Activated CD4-positive, alpha-beta memory T cell treated with anti-CD3 and anti-CD28 coated beads, Interleukin-2, amount 10 ng/mL, durations not matched to agents 7 days and 5 days (primary cell): ENCODE measurements at regions of chr2 and their contacts with region 1.

Region 1: GRCh38 chr2:26033818-26034636 is at the start of gene RAB10:
- DNase-seq: peak; percentile 100
- H3K4me3 Mint-ChIP-seq: peak within 1 kb of the TSS; percentile 87
- H3K27ac Mint-ChIP-seq: peak within 1 kb of the TSS; percentile 93
- H3K4me1 Mint-ChIP-seq: peaks cover 35% of the 10 kb centered on the region
- H3K27me3 Mint-ChIP-seq: no peaks in the 10 kb centered on the region
- total RNA-seq, gene RAB10: 116 to 117 TPM

Region 2: DNA sequence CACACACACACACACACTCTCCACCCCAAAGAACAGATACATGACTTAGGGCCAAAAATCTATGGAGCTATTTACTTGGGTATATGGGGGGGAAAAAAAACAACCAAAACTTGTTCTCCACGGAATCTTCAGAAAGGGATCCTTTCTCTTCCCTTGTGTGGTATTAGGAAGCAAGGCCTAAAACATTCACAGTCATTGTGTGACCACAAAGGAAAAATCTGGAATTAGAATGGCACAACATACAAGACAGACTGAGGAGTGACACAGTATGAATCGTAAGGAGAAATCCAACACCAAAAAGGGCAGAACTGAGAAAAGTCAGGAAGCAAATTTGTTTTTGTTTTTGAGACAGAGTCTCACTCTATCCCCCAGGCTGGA is 226.0 kb before region 1 on chr2:
- CTCF ChIA-PET with region 1: no interaction called
- POLR2A ChIA-PET with region 1: no interaction called
- DNase-seq: no peak
- H3K4me3 Mint-ChIP-seq: no peak overlapping the region
- H3K27ac Mint-ChIP-seq: no peak overlapping the region
- H3K4me1 Mint-ChIP-seq: peaks cover 49% of the 10 kb centered on the region
- H3K27me3 Mint-ChIP-seq: no peaks in the 10 kb centered on the region

Region 3: DNA sequence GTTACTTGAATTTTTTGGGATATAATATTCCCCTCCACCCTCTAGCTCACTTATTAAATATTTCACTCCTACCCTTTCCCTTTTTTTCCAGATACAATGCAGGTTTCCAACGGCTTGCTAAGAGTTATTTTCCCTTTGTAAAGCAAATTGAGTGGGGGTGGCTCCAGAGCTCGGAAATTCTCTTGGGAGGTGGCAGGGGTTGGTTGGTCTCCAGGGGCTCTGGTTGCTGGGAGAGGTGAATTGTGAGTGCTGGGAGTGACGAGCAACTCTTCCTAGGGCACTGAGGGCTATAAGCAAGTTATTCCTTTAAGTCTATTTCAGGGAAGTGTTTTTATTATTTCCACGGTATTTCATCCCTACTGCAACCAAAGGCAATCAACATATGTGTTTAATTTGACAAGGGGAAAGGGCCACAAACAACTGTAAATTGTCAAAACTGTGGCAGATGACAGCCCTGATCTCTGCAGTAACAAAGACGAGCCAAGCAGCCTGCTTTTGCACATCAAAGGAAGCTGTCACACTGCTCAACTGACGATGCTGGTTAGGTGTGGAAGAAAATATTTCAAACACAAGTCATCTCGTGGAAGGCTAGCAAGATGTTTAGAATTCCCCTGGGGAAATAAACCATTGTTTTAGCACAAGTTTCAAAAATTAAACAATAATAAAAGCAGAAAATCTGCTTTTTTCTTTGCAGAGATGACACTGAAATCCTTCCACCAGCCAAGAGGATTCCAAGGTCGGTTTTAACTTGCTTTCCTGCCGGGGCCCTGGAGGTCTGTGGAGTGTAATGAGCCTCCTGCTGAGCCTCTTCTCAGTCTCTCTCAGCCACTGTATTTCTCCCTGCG is 121.0 kb before region 1 on chr2:
- CTCF ChIA-PET with region 1: no interaction called
- POLR2A ChIA-PET with region 1: no interaction called
- DNase-seq: no peak
- H3K4me3 Mint-ChIP-seq: no peak overlapping the region
- H3K27ac Mint-ChIP-seq: no peak overlapping the region
- H3K4me1 Mint-ChIP-seq: peaks cover 11% of the 10 kb centered on the region
- H3K27me3 Mint-ChIP-seq: peaks cover 3% of the 10 kb centered on the region

Region 4: DNA sequence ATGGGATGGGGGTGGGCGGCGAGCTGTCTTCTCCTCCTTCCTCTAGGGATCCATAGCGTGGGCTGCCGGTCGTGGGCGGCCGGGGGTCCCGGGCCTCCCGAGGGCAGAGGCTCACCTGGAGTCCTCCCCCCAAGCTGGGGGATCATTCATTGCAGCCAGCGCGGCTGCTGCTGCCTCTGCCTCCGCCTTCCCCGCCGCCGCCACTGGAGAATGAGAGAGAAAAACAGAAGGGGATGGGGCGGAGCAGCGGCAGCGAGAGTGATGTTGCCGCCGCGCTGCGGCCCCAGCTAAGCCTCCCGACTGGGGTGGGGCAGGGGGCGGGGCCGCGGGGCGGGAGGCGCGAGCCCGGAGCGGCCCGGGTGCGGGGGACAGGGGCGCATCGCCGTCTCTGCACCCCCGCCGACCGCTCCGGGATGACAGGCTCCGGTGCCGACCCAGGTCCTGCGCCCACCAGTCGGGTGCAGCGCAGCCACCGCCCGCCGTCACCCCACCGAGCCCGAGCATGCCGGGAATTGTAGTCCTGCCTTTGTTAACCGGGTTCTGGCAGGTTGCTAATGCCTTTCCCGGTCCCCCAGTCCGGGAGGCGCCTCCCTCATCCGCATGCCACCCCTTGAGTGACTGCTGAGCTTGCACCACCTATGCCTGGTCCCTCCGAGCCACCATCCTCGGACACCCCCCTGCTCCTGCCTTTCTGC is 51.6 kb before region 1 on chr2 and contains the start of gene KIF3C:
- CTCF ChIA-PET with region 1: no interaction called
- POLR2A ChIA-PET with region 1: interaction called, 10 read pairs
- DNase-seq: peak; percentile 80
- H3K4me3 Mint-ChIP-seq: peak within 1 kb of the TSS; percentile 86
- H3K27ac Mint-ChIP-seq: peak within 1 kb of the TSS; percentile 67
- H3K4me1 Mint-ChIP-seq: peaks cover 18% of the 10 kb centered on the region
- H3K27me3 Mint-ChIP-seq: peaks cover 4% of the 10 kb centered on the region
- total RNA-seq, gene KIF3C: 10.3 to 10.7 TPM

Region 5: GRCh38 chr2:26018176-26018716 is 15.8 kb before region 1 on chr2:
- CTCF ChIA-PET with region 1: interaction called, 6 read pairs
- POLR2A ChIA-PET with region 1: interaction called, 11 read pairs
- DNase-seq: peak; percentile 62
- H3K4me3 Mint-ChIP-seq: no peak overlapping the region
- H3K27ac Mint-ChIP-seq: no peak overlapping the region
- H3K4me1 Mint-ChIP-seq: peaks cover 17% of the 10 kb centered on the region
- H3K27me3 Mint-ChIP-seq: peaks cover 2% of the 10 kb centered on the region

Region 6: GRCh38 chr2:26059542-26059941 is 25.5 kb after region 1 on chr2:
- CTCF ChIA-PET with region 1: interaction called, 4 read pairs
- POLR2A ChIA-PET with region 1: interaction called, 171 read pairs
- DNase-seq: no peak
- H3K4me3 Mint-ChIP-seq: no peak overlapping the region
- H3K27ac Mint-ChIP-seq: no peak overlapping the region
- H3K4me1 Mint-ChIP-seq: peaks cover 48% of the 10 kb centered on the region
- H3K27me3 Mint-ChIP-seq: no peaks in the 10 kb centered on the region

Region 7: DNA sequence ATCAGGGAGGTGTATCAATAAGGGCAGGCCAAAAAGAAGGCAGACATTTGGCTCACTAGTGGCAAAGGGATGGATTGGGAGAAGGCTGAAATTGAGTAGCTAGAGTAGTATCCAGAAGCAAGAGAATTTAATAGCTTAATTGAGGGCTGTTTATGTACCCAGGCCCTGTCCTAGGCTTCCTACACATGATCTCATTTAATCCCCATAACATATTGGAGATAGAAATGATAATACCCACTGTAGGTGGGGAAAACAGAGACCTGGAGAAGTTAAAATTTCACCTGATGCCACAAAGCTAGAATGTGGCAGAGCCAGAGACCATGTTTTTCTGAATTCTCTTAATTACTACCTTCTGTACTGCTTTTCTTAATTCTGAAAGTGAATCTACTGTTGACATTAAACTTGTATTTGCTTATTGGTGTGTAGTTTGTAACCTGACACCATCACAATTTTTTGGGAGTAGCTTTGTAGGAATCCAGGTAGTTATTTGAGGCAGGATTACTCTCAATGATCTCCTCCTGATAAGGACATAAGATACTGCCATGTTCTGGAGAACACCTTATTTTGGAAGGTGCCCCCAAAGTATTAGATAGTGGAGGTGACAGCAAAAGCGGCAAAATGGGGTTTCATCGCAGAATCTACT is 42.1 kb after region 1 on chr2:
- CTCF ChIA-PET with region 1: no interaction called
- POLR2A ChIA-PET with region 1: interaction called, 171 read pairs
- DNase-seq: no peak
- H3K4me3 Mint-ChIP-seq: no peak overlapping the region
- H3K27ac Mint-ChIP-seq: no peak overlapping the region
- H3K4me1 Mint-ChIP-seq: peaks cover 29% of the 10 kb centered on the region
- H3K27me3 Mint-ChIP-seq: no peaks in the 10 kb centered on the region

Region 8: DNA sequence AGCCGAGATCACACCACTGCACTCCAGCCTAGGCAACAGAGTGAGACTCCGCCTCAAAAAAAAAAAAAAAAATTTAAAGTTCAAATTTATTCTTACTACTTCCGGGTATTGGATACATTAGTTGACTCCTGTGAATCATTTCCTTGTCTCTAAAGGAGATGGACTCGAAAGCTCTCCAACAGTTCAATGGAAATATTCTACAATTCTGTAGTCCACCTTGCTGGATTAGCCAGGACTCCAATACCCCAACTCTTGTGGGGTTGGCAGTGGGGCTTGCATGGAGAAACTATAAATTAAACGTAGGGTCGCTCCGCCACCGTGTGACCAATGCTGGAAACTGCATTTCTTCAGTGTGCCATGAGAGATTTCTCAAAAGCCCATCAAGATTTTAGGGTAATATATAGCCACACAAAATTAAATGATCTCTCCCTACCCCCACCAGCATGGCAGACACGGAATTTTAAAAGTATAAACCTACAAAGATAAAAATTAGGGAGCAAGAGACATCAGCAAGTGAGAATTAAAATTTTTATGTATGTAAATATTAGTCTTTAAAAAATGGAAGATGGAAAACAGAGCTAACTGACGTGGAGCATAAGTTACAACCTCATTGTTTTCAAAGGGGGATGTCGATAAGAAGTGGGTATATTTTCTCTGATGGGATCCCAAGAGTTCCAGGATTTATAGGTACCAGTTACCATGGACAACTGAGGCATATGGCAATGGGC is 111.1 kb after region 1 on chr2:
- CTCF ChIA-PET with region 1: interaction called, 12 read pairs
- POLR2A ChIA-PET with region 1: interaction called, 3 read pairs
- DNase-seq: peak; percentile 74
- H3K4me3 Mint-ChIP-seq: no peak overlapping the region
- H3K27ac Mint-ChIP-seq: no peak overlapping the region
- H3K4me1 Mint-ChIP-seq: no peaks in the 10 kb centered on the region
- H3K27me3 Mint-ChIP-seq: peaks cover 10% of the 10 kb centered on the region